ENCODE measurements at regions of chr6 and their contacts with region 1.

Region 1: DNA sequence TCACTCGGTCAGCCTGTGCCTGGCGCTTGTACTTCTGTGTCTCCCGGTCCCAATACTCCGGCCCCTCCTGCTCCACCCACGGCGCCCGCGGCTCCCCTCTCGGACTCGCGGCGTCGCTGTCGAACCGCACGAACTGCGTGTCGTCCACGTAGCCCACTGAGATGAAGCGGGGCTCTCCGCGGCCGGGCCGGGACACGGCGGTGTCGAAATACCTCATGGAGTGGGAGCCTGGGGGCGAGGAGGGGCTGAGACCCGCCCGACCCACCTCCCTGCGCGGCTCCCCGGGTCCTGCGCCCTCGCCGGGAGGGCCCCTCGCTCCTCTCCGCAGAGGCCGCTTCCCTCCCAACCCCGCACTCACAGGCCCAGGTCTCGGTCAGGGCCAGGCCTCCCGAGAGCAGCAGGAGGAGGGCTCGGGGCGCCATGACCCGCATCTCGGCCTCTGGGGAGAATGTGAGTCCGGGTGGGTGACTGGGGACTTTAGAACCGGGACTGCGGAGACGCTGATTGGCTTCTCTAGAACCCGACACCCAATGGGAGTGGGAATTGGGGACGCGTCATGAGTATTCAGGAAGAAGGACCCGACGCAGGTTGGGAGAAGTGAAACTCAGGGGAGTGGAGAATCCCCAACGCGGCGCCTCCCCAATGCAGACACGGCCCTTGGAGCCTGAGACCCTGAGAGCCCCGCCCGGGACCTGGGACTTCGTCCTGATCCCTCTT is at the start of gene HLA-C:
- DNase-seq: peak; percentile 96
- H3K4me3 ChIP-seq: peak within 1 kb of the TSS; percentile 53 to 93 (median 70)
- H3K27ac ChIP-seq: peak within 1 kb of the TSS; percentile 93 to 100 (median 98)
- H3K4me1 ChIP-seq: peaks cover 9 to 47% (median 38%) of the 10 kb centered on the region in 6 donors
- H3K27me3 ChIP-seq: no peaks in the 10 kb centered on the region
- CTCF ChIP-seq: no peak
- POLR2A ChIP-seq: peak in 2 of 3 donors; percentile 46 to 95
- total RNA-seq, gene HLA-C: 484 to 2,036 (median 1,738) TPM

Region 2: GRCh38 chr6:31203345-31203979 is 68.3 kb before region 1 on chr6:
- intact Hi-C with region 1: loop called (anchors 10 kb)
- DNase-seq: no peak
- H3K4me3 ChIP-seq: peak overlapping the region; percentile 12 to 70 (median 42)
- H3K27ac ChIP-seq: peak overlapping the region; percentile 86 to 100 (median 94)
- H3K4me1 ChIP-seq: peaks cover 21 to 81% (median 47%) of the 10 kb centered on the region in 6 donors
- H3K27me3 ChIP-seq: no peaks in the 10 kb centered on the region
- CTCF ChIP-seq: no peak
- POLR2A ChIP-seq: no peak

Region 3: DNA sequence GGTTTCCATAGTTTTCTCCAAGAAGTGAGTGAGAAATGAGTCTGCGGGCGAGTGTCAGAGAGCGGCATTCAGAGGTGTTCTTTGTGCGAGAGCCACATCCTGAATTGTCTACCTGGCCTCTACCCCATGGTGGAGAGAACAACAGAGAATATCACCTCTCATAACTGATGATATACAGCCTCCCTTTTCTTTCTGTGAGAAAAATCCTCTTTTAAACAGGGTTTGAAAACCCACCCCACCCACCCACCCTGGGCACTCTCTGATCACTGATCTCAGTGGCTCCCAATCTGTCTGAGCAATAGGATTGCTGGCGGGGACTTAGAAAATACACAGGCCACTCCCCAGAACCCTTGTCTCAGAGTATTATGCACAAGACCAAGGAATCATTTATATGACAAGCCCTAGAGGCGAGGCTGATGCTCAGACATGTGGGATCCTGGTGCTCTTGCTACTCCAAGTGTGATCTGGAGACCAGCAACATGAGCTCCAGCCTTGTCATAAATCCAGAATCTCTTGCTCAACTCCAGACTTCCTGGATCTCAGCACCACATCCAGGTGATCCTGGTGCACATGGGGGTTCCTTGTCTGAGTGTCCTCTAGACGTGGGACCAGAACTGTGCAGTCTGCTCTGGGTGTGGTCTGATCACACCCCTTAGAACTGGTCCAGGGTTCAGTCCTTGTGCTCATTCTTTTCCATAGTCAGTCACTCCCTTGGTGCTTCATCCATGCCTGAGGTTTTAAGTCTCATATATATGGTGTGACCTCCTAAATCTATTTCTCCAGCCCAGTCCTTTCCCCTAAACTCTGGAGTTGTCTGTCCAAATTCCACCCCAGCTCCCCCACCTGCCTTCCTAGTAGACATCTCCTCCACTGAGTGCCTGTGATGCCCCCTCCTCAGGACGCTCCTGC is 79.9 kb after region 1 on chr6:
- intact Hi-C with region 1: loop called (anchors 5 kb)
- DNase-seq: no peak
- H3K4me3 ChIP-seq: no peak overlapping the region
- H3K27ac ChIP-seq: peak overlapping the region in 3 of 8 donors; percentile 7 to 46 (median 33)
- H3K4me1 ChIP-seq: peaks cover 19 to 49% (median 41%) of the 10 kb centered on the region in 6 donors
- H3K27me3 ChIP-seq: no peaks in the 10 kb centered on the region
- CTCF ChIP-seq: no peak
- POLR2A ChIP-seq: no peak

Region 4: DNA sequence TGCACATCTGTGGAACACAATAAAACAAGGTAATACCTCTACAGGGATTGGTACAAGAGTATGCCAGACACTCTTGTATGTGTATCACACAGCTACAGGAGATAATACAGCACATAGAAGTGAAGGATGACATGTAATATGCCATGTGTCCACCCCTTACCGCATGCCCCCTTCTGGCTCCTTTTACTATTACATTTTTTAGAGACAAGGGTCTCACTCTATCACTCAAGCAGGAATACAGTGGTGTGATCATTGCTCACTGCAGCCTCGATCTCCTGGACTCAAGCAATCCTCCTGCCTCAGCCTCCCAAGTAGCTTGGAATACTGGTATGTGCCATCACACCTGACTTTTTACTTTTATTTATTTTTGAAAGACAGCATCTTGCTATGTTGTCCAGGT is 325.2 kb after region 1 on chr6:
- intact Hi-C with region 1: no loop called
- DNase-seq: no peak
- H3K4me3 ChIP-seq: no peak overlapping the region
- H3K27ac ChIP-seq: peak overlapping the region in 4 of 8 donors; percentile 5 to 50 (median 40)
- H3K4me1 ChIP-seq: peaks cover 9 to 70% (median 39%) of the 10 kb centered on the region in 6 donors
- H3K27me3 ChIP-seq: no peaks in the 10 kb centered on the region
- CTCF ChIP-seq: peak; percentile 13 to 79 (median 69)
- POLR2A ChIP-seq: no peak